ENCODE measurements at regions of chr19 and their contacts with region 1.

Region 1: DNA sequence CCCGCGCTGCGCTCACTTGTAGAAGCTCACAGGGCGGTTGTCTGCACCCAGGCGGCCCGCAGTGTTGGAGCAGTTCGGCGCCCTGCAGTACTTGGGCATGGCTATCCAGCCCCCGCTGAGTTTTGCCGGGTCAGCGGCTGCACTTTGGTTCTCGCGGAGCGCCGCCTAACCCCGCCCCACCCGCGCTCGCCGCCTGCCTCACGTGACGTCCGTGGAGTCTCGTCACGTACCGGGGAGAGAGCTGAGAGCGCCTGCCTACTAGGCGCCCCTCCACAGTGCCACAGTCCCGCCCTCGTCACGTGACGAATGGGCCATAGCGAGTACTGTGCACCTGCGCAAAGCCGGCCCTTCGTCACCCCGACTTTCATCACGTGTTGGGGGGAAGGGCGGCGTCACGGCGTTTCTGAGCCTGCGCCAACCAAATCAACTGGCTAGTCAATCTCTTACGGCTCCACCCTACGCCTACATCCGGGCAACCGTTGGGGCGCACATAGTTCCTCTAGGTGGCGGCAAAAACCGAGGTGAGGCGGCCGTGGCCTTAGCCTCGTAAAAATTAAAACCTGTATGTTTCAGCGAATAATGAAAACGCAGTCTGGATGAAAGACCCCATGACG is at the start of gene THAP8:
- DNase-seq: peak; percentile 99
- ATAC-seq: peak; percentile 89
- H3K4me3 ChIP-seq: peak within 1 kb of the TSS; percentile 76
- H3K27ac ChIP-seq: peak within 1 kb of the TSS; percentile 81
- H3K4me1 ChIP-seq: no peaks in the 10 kb centered on the region
- H3K27me3 ChIP-seq: no peaks in the 10 kb centered on the region
- CTCF ChIP-seq: peak; percentile 55
- POLR2A ChIP-seq: peak; percentile 72
- RAD21 ChIP-seq: no peak
- total RNA-seq, gene THAP8: 1.8 and 2.2 TPM in 2 replicates

Region 2: DNA sequence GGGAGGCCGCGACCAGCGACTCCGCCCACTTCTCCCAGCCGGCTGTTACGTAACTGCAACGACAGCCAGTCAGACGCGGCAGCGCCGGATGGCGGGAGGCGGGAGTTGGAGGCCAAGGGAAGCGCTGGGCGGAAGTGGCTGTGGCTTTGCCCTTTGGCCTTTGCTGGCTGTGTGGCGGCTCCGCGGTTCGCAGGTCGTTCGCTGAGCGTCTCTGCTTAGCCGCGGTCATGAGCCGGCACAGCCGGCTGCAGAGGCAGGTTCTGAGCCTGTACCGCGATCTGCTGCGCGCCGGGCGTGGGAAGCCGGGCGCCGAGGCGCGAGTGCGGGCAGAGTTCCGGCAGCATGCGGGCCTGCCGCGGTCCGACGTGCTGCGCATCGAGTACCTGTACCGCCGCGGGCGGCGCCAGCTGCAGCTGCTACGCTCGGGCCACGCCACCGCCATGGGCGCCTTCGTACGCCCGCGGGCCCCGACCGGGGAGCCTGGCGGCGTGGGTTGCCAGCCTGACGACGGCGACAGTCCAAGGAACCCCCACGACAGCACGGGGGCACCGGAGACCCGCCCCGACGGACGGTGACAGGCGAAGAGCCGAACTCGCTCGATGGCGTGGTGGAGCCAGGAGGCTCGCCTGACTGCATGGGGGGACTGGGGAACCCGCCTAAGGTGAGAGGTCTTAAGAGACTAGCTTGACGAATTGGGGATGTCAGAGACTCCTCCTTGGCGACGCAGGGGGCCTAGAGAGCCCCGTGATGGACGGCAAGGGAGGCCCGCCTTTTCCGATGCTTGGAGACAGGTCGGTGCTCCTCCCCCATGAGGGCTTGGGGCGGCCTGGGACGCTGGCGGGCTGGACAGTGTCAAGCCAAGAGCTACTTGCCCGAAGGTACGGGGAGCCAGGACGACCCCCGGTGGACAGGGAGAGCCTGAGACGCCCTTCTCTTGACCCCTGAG is 58.9 kb before region 1 on chr19 and contains the start of gene SDHAF1:
- CTCF ChIA-PET with region 1: no interaction called
- POLR2A ChIA-PET with region 1: no interaction called
- dilution Hi-C with region 1: no loop called
- in situ Hi-C with region 1: no loop called
- intact Hi-C with region 1: loop called (anchors 2 kb)
- DNase-seq: peak; percentile 90
- ATAC-seq: peak; percentile 91
- H3K4me3 ChIP-seq: peak within 1 kb of the TSS; percentile 71
- H3K27ac ChIP-seq: peak within 1 kb of the TSS; percentile 67
- H3K4me1 ChIP-seq: peaks cover 2% of the 10 kb centered on the region; the same call in 1 of the 2 replicates
- H3K27me3 ChIP-seq: no peaks in the 10 kb centered on the region
- CTCF ChIP-seq: no peak
- POLR2A ChIP-seq: no peak
- RAD21 ChIP-seq: no peak; the same call in 1 of the 2 replicates
- total RNA-seq, gene SDHAF1: 4.8 and 5.0 TPM in 2 replicates

Region 3: DNA sequence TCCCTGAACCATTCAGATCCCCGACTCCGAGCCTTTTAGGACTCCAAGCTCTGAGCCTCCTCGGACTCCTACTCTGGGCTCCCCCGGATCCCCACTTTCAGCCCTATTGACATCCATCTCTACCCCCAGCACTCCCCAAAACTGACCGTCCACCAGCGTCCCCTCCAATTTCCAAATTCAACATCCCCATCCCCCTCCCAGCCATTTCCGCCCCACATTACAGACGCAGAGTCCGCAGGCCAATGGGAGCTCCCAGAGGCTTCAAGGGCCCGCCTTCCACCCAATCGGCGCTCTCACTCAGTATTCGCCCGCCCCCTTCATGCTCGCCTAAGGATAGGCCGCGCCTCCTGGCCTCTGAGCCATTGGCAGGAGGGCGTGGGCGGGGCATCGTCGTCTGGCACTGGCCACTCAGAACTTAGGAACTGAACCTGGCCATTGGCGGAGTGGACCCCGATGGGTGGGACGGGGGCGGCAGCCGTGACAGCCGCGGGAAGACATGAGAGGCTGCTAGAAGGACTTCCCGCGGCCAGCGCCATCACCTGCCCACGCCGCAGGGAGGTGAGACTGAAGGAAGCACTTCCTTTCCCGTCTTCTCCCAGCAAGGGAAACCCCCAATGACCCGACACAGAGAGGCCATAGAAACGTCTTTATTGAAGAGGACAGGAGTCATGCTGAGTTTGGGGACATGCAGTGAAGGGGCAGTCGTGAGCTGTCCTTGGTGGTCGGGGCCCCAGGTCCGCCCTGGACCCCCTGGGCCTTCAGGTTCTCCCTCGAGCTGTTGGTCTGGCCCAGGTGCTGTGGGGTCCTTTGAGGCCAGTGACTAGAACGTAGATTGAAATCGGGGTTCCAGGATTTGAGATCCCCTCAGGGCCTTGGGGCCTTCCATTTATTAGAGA is 39.9 kb before region 1 on chr19 and contains the start of gene ALKBH6:
- CTCF ChIA-PET with region 1: no interaction called
- POLR2A ChIA-PET with region 1: no interaction called
- dilution Hi-C with region 1: no loop called
- in situ Hi-C with region 1: no loop called
- intact Hi-C with region 1: loop called (anchors 1 kb)
- DNase-seq: peak; percentile 97
- ATAC-seq: peak; percentile 98
- H3K4me3 ChIP-seq: peak within 1 kb of the TSS; percentile 88
- H3K27ac ChIP-seq: peak within 1 kb of the TSS; percentile 73
- H3K4me1 ChIP-seq: peaks cover 7% of the 10 kb centered on the region; the same call in 1 of the 2 replicates
- H3K27me3 ChIP-seq: no peaks in the 10 kb centered on the region
- CTCF ChIP-seq: no peak
- POLR2A ChIP-seq: peak; percentile 53; the same call in 1 of the 2 replicates
- RAD21 ChIP-seq: no peak
- total RNA-seq, gene ALKBH6: 10.3 and 12.9 TPM in 2 replicates

Region 4: DNA sequence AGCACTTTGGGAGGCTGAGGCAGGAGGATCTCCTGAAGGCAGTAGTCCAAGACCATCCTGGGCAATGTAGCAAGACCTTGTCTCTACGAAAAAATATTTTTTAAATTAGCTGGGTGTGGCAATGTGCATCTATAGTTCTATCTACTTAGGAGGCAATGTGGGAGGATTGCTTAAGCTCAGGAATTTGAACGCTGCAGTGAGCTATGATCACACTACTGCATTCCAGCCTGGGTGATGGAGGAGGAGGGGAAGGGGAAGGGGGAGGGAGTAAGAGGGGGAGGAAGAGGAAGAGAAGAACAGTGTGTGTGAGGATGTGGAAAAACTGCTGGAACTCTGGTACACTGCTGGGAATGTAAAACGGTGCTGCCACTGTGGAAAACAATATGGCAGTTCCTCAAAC is 12.4 kb before region 1 on chr19:
- CTCF ChIA-PET with region 1: no interaction called
- POLR2A ChIA-PET with region 1: no interaction called
- dilution Hi-C with region 1: no loop called
- in situ Hi-C with region 1: no loop called
- intact Hi-C with region 1: loop called (anchors 1 kb)
- DNase-seq: peak; percentile 82
- ATAC-seq: peak; percentile 97
- H3K4me3 ChIP-seq: no peak overlapping the region
- H3K27ac ChIP-seq: peak overlapping the region; percentile 74; the same call in 1 of the 2 replicates
- H3K4me1 ChIP-seq: peaks cover 9% of the 10 kb centered on the region
- H3K27me3 ChIP-seq: no peaks in the 10 kb centered on the region
- CTCF ChIP-seq: no peak
- POLR2A ChIP-seq: no peak
- RAD21 ChIP-seq: no peak

Region 5: GRCh38 chr19:36489118-36489919 is 435.1 kb after region 1 on chr19 and contains the start of gene ZNF566:
- CTCF ChIA-PET with region 1: no interaction called
- POLR2A ChIA-PET with region 1: interaction called, 11 read pairs
- dilution Hi-C with region 1: no loop called
- in situ Hi-C with region 1: no loop called
- intact Hi-C with region 1: no loop called
- DNase-seq: peak; percentile 97
- ATAC-seq: peak; percentile 95
- H3K4me3 ChIP-seq: peak within 1 kb of the TSS; percentile 64
- H3K27ac ChIP-seq: peak within 1 kb of the TSS; percentile 91
- H3K4me1 ChIP-seq: no peaks in the 10 kb centered on the region
- H3K27me3 ChIP-seq: no peaks in the 10 kb centered on the region
- CTCF ChIP-seq: no peak
- POLR2A ChIP-seq: peak; percentile 75
- RAD21 ChIP-seq: no peak
- total RNA-seq, gene ZNF566: 4.8 and 8.6 TPM in 2 replicates

Measured in IMR-90 (cell line).